PC-9 (cell line): ENCODE measurements at regions of chr1 and their contacts with region 1.

Region 1: GRCh38 chr1:40224040-40224439 is 23.7 kb upstream of the TMCO2 start:
- DNase-seq: no peak
- H3K4me3 ChIP-seq: no peak overlapping the region
- H3K27ac ChIP-seq: no peak overlapping the region
- H3K4me1 ChIP-seq: no peaks in the 10 kb centered on the region
- H3K27me3 ChIP-seq: no peaks in the 10 kb centered on the region
- CTCF ChIP-seq: no peak

Region 2: GRCh38 chr1:39625462-39626273 is 598.4 kb before region 1 on chr1:
- CTCF ChIA-PET with region 1: interaction called, 10 read pairs
- POLR2A ChIA-PET with region 1: no interaction called
- intact Hi-C with region 1: no loop called
- DNase-seq: no peak
- H3K4me3 ChIP-seq: no peak overlapping the region
- H3K27ac ChIP-seq: no peak overlapping the region
- H3K4me1 ChIP-seq: no peaks in the 10 kb centered on the region
- H3K27me3 ChIP-seq: peaks cover 57% of the 10 kb centered on the region
- CTCF ChIP-seq: no peak

Region 3: DNA sequence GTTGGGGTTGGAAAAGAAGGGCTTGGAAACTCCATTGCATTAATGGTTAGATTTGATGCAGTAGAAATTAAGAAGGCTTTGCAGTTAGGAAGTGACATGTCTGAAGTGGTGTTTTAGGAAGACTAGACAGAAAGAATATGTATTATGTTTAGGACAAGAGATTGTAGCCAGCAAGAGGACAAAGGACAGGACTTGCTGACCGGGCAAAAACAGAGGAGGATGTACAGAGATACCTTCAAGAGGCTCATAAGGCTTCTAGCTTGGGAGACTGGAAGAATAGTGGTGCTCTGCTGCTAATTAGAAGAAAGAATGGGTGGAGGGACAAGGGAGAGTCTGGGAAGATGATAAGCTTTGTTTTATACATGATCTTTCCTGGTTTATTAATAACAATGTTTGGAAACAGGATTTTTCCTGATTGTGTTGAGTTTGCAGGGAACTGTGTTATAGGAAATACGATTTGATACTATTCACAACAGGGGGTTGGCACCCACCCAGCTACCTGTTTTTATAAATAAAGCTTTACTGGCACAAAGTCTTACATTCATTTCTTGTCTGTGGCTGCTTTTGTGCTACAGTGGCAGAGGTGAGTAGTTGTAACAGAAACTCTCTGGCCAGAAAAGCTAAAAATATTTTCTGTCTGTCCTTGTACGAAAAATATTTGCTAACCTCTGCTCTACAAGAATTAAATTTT is 13.4 kb before region 1 on chr1:
- CTCF ChIA-PET with region 1: interaction called, 14 read pairs
- POLR2A ChIA-PET with region 1: interaction called, 3 read pairs
- intact Hi-C with region 1: no loop called
- DNase-seq: no peak
- H3K4me3 ChIP-seq: no peak overlapping the region
- H3K27ac ChIP-seq: no peak overlapping the region
- H3K4me1 ChIP-seq: no peaks in the 10 kb centered on the region
- H3K27me3 ChIP-seq: no peaks in the 10 kb centered on the region
- CTCF ChIP-seq: no peak

Region 4: DNA sequence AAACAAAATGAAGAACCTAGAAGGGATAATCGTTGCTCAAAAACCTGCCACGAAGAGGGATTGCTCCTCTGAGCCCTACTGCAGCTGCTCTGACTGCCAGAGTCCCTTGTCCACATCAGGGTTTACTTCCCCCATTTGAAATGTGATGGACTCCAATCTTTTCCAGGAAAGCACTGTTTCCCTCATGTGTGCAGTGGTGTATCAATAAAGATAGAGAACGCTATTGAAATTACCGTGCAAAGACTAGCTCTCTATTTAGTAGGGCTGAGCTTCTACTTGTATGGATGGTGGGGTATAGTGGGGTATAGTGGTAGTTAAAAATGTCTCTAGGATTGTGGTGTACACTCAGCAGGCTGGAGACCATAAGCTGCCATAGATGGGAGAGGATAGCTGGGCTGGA is 27.4 kb after region 1 on chr1:
- CTCF ChIA-PET with region 1: no interaction called
- POLR2A ChIA-PET with region 1: interaction called, 19 read pairs
- intact Hi-C with region 1: no loop called
- DNase-seq: no peak
- H3K4me3 ChIP-seq: no peak overlapping the region
- H3K27ac ChIP-seq: no peak overlapping the region
- H3K4me1 ChIP-seq: peaks cover 6% of the 10 kb centered on the region
- H3K27me3 ChIP-seq: no peaks in the 10 kb centered on the region
- CTCF ChIP-seq: no peak

Region 5: GRCh38 chr1:40338745-40339424 is 114.8 kb after region 1 on chr1:
- CTCF ChIA-PET with region 1: interaction called, 12 read pairs
- POLR2A ChIA-PET with region 1: no interaction called
- intact Hi-C with region 1: no loop called
- DNase-seq: peak; percentile 71 to 93
- H3K4me3 ChIP-seq: no peak overlapping the region; the same call in 1 of the 2 replicates
- H3K27ac ChIP-seq: no peak overlapping the region
- H3K4me1 ChIP-seq: peaks cover 10% of the 10 kb centered on the region
- H3K27me3 ChIP-seq: no peaks in the 10 kb centered on the region
- CTCF ChIP-seq: peak; percentile 98